H1 (cell line): ENCODE measurements at regions of chr5 and their contacts with region 1.

Region 1: DNA sequence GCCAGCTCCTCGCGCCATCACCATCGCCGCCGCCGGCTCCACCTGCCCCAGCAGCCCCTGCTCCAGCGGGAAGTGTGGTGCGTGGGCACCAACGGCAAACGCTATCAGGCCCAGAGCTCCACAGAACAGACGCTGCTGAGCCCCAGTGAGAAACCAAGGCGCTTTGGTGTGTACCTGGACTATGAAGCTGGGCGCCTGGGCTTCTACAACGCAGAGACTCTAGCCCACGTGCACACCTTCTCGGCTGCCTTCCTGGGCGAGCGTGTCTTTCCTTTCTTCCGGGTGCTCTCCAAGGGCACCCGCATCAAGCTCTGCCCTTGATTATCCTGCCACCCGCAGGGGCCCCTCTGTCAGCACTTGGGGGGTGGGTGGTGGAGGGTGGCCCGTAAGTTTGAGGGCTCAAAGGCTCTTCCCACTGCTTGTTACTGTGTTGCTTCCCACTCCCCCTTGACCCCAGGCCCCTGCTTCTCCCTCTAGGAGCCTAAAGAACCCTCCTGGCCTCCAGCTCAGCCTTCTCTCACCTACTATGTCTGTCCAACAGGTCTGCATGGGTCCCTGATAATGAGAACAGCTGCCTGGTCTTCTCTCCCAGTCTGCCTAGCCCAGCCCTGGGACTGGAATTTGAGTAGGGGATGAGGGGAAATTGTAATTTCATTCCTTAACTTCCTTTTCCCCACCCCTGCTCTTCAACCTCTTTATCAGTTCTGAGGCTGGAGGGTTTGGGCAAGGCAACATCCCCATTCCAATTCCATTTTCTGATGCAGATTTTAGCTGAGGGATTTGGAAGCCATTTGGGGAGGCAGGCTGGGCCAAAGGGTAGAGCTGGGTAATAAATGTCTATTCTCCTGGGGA is 9.0 kb downstream of the RACK1 start:
- DNase-seq: no peak
- H3K4me3 ChIP-seq: no peak overlapping the region
- H3K27ac ChIP-seq: no peak overlapping the region; the same call in 1 of the 2 replicates
- H3K4me1 ChIP-seq: peaks cover 0 to 6% (median 0%) of the 10 kb centered on the region in 4 experiments; a peak in 3 of 7 replicates
- H3K27me3 ChIP-seq: no peaks in the 10 kb centered on the region
- CTCF ChIP-seq: no peak
- EP300 ChIP-seq: no peak
- POLR2A ChIP-seq: peak; percentile 69 to 76
- RAD21 ChIP-seq: no peak

Region 2: DNA sequence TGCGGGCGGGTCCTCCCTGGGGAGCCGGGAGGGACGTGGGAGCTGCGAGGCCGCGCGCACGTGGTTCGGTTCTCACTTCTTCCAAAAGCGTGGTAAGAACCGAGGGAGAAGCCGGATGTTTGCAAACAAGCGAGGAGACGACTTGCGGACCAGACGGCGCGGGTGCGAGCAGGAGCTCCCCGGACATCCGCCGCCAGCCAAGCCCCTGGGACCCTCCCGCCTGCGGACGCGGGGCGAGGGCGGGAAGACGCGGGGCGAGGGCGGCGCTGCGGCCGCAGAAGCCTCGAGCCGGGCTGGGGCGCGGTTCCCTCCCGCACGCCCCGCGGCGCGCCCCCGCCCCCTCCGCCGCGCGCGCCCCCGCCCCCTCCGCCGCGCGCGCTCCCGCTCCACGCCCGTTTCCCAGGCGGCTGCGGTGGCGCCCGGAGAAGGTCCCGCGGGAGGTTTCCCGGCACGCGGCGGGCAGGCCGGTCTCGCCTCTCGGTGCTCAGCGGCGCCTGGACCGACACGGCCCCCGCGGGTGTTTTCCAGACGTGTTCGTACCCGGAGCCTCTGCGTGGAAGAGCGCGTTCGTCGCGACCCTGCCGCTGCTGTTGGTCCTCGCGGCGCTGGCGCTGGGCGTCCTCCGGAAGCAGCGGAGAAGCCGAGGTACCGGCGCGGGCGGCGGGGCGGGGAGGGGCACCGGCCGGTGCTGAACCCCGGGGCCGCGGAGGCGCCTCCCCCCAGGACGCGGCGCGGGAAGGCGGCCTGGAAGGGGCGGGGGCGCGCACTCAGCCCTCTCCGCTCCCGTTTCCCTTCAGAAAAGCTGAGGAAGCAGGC is 181.8 kb before region 1 on chr5:
- CTCF ChIA-PET with region 1: no interaction called
- POLR2A ChIA-PET with region 1: no interaction called
- DNase-seq: peak in 1 of 2 experiments; percentile 70
- H3K4me3 ChIP-seq: peak overlapping the region; percentile 57 to 85 (median 68)
- H3K27ac ChIP-seq: no peak overlapping the region
- H3K4me1 ChIP-seq: peaks cover 3 to 16% (median 9%) of the 10 kb centered on the region in 4 experiments; a peak in 6 of 7 replicates
- H3K27me3 ChIP-seq: peaks cover 44 to 83% (median 68%) of the 10 kb centered on the region in 4 experiments
- CTCF ChIP-seq: no peak
- EP300 ChIP-seq: no peak
- POLR2A ChIP-seq: no peak
- RAD21 ChIP-seq: no peak

Region 3: DNA sequence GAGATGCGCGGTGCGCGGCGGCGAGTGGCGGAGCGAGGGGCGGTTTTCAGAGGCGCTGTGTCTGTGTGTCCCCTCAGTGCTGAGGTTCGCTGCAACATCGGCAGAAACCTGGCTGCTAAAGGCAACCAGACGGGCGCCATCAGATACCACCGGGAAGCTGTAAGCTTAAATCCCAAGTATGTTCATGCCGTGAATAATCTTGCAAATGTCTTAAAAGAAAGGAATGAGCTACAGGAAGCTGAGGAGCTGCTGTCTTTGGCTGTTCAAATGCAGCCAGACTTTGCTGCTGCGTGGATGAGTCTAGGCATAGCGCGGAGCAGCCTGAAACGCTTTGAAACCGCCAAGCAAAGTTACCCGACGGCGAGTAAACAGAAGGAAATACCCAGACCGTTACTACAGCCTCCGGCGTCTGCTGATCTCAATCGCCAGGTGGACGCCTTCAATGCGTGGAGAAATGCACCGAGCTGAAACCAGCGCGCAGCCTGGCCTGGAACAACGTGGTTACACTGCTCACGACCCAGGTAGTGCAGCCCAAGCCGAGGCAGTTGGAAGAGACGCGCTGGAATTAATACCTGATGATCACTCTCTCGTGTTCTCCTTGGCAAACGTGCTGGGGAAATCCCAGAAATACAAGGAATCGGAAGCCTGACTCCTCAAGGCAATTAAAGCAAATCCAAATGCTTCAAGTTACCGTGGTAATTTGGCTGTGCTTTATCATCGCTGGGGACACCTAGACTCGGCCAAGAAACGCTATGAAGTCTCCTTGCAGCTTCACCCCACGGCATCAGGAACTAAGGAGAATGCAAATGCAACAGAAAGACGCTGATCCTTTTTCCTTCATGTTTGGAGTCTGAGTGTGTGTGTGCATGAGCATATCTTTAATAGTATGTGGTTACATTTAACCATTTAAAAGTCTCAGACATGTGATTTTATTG is 119.6 kb before region 1 on chr5:
- CTCF ChIA-PET with region 1: no interaction called
- POLR2A ChIA-PET with region 1: no interaction called
- DNase-seq: peak in 1 of 2 experiments; percentile 65
- H3K4me3 ChIP-seq: peak overlapping the region; percentile 41 to 56 (median 52); a peak in 7 of 8 replicates
- H3K27ac ChIP-seq: no peak overlapping the region
- H3K4me1 ChIP-seq: peaks cover 0 to 8% (median 1%) of the 10 kb centered on the region in 4 experiments; a peak in 5 of 7 replicates
- H3K27me3 ChIP-seq: peaks cover 12 to 41% (median 28%) of the 10 kb centered on the region in 4 experiments
- CTCF ChIP-seq: no peak
- EP300 ChIP-seq: no peak
- POLR2A ChIP-seq: no peak
- RAD21 ChIP-seq: no peak

Region 4: GRCh38 chr5:181159286-181159829 is 75.3 kb before region 1 on chr5:
- CTCF ChIA-PET with region 1: no interaction called
- POLR2A ChIA-PET with region 1: no interaction called
- DNase-seq: peak; percentile 74 to 99
- H3K4me3 ChIP-seq: no peak overlapping the region
- H3K27ac ChIP-seq: no peak overlapping the region
- H3K4me1 ChIP-seq: peaks cover 1 to 10% (median 5%) of the 10 kb centered on the region in 4 experiments; a peak in 4 of 7 replicates
- H3K27me3 ChIP-seq: peaks cover 0 to 14% (median 12%) of the 10 kb centered on the region in 4 experiments; a peak in 4 of 7 replicates
- CTCF ChIP-seq: peak; percentile 88 to 92 (median 91)
- EP300 ChIP-seq: no peak
- POLR2A ChIP-seq: no peak
- RAD21 ChIP-seq: peak; percentile 82 to 88

Region 5: GRCh38 chr5:181173420-181174342 is 61.0 kb before region 1 on chr5:
- CTCF ChIA-PET with region 1: no interaction called
- POLR2A ChIA-PET with region 1: interaction called, 15 read pairs
- DNase-seq: peak; percentile 94 to 98
- H3K4me3 ChIP-seq: peak overlapping the region; percentile 62 to 72 (median 66)
- H3K27ac ChIP-seq: no peak overlapping the region
- H3K4me1 ChIP-seq: no peaks in the 10 kb centered on the region; a peak in 1 of 7 replicates
- H3K27me3 ChIP-seq: peaks cover 6 to 35% (median 25%) of the 10 kb centered on the region in 4 experiments; a peak in 6 of 7 replicates
- CTCF ChIP-seq: peak in 2 of 3 experiments; percentile 2 to 17; a peak in 1 of 4 replicates
- EP300 ChIP-seq: no peak
- POLR2A ChIP-seq: no peak
- RAD21 ChIP-seq: no peak

Region 6: DNA sequence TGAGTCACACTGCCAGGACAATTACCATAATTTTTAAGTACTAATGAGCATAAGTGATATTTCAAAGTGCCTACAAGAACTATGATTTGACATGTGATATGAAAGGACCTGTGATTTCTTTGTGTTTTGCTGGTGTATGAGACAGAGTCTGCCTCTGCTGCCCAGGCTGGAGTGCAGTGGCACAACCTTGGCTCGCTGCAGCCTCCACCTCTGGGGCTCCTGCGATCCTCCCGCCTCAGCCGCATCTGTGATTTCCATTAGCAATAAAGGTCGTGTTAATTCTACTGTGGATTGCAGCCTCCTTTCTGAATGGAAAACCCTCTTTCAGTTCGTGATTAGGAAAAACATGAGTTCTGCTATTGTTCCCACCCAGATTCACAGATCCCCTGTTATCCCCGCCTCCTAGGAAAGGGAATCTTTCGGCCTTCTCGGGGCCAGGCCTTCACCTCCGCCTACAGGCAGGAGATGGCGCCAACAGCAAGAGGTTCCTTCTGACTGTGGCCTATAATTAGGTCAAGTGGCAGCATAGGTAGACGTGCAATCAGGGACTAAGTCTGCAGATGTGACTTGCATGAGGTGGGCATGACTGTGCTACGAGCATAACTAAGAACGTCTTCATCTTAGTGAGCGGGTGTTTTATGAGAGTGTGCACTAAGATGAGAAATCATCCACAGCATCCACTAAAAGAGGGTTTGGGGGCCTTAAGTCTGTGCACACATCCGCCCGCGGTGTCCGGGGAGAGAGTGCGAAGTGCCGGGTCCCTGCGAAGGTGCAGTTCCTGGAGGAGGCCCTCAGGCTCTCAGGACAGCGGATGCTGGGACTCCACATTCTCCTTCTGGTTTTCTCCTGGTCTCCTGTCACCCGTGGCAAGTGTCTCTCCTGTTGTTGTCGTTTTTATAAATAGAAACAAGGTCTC is 52.8 kb before region 1 on chr5:
- CTCF ChIA-PET with region 1: interaction called, 3 read pairs
- POLR2A ChIA-PET with region 1: interaction called, 12 read pairs
- DNase-seq: peak in 1 of 2 experiments; percentile 76
- H3K4me3 ChIP-seq: no peak overlapping the region
- H3K27ac ChIP-seq: no peak overlapping the region
- H3K4me1 ChIP-seq: no peaks in the 10 kb centered on the region
- H3K27me3 ChIP-seq: no peaks in the 10 kb centered on the region
- CTCF ChIP-seq: peak in 2 of 3 experiments; percentile 80 to 90; a peak in 3 of 4 replicates
- EP300 ChIP-seq: no peak
- POLR2A ChIP-seq: no peak
- RAD21 ChIP-seq: peak; percentile 85

Region 7: DNA sequence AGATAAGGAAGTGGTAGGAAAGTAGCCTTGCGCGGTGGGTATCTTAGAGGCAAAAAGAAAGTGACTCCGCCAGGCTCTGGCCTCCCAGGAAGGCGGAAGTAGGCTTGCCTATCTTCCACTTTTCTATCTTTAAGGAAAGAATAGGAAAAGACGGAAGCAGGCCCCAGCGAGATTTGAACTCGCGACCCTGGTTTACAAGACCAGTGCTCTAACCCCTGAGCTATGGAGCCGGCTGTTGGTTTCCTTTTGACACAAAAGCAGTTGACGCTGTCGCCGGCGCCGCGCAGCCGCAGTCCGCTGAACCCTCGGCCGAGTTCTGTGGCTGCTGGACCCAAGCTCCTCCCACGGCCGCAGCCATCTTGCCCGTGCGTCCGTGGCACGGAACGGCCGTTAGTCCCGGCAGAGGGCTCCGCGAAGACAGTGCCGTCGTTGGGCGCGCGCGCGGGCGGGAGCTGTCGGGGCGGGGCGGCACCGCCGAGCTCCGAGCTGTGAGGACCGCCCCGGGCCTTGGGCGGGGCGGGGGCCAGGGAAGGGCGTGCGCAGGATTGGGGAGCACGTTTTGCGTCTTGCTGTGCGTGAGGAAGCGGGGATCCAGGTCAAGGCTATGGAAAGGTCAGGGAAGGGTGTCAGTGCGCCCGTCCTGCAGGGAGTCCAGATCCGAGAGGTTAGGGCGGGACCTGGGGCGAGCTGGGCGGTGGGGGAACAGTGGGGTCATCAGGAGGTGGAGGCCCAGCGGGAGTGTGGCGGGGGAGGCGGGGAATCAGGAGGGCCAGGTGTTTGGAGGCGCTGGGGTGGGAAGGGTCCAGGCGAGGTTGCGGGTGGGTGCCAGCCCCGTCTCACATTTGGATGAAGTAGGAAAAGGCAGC is 42.9 kb before region 1 on chr5:
- CTCF ChIA-PET with region 1: no interaction called
- POLR2A ChIA-PET with region 1: interaction called, 22 read pairs
- DNase-seq: peak; percentile 87 to 100
- H3K4me3 ChIP-seq: peak overlapping the region; percentile 62 to 90 (median 78)
- H3K27ac ChIP-seq: no peak overlapping the region
- H3K4me1 ChIP-seq: peaks cover 0 to 11% (median 5%) of the 10 kb centered on the region in 4 experiments; a peak in 5 of 7 replicates
- H3K27me3 ChIP-seq: peaks cover 15 to 34% (median 23%) of the 10 kb centered on the region in 4 experiments; a peak in 6 of 7 replicates
- CTCF ChIP-seq: no peak
- EP300 ChIP-seq: no peak
- POLR2A ChIP-seq: no peak; a peak in 1 of 3 replicates
- RAD21 ChIP-seq: no peak

Region 8: GRCh38 chr5:181198963-181199519 is 35.6 kb before region 1 on chr5:
- CTCF ChIA-PET with region 1: no interaction called
- POLR2A ChIA-PET with region 1: interaction called, 85 read pairs
- DNase-seq: no peak
- H3K4me3 ChIP-seq: peak overlapping the region in 1 of 4 experiments; percentile 22; a peak in 2 of 8 replicates
- H3K27ac ChIP-seq: no peak overlapping the region
- H3K4me1 ChIP-seq: peaks cover 9 to 36% (median 20%) of the 10 kb centered on the region in 4 experiments
- H3K27me3 ChIP-seq: peaks cover 11 to 60% (median 37%) of the 10 kb centered on the region in 4 experiments
- CTCF ChIP-seq: no peak
- EP300 ChIP-seq: no peak
- POLR2A ChIP-seq: no peak
- RAD21 ChIP-seq: no peak

Region 9: GRCh38 chr5:181281077-181281983 is 46.6 kb after region 1 on chr5:
- CTCF ChIA-PET with region 1: no interaction called
- POLR2A ChIA-PET with region 1: interaction called, 11 read pairs
- DNase-seq: peak; percentile 85 to 91
- H3K4me3 ChIP-seq: peak overlapping the region; percentile 54 to 93 (median 88)
- H3K27ac ChIP-seq: peak overlapping the region; percentile 93
- H3K4me1 ChIP-seq: no peaks in the 10 kb centered on the region
- H3K27me3 ChIP-seq: no peaks in the 10 kb centered on the region
- CTCF ChIP-seq: no peak
- EP300 ChIP-seq: no peak
- POLR2A ChIP-seq: peak; percentile 86 to 87
- RAD21 ChIP-seq: no peak